ENCODE measurements at regions of chr10 and their contacts with region 1.

Region 1: DNA sequence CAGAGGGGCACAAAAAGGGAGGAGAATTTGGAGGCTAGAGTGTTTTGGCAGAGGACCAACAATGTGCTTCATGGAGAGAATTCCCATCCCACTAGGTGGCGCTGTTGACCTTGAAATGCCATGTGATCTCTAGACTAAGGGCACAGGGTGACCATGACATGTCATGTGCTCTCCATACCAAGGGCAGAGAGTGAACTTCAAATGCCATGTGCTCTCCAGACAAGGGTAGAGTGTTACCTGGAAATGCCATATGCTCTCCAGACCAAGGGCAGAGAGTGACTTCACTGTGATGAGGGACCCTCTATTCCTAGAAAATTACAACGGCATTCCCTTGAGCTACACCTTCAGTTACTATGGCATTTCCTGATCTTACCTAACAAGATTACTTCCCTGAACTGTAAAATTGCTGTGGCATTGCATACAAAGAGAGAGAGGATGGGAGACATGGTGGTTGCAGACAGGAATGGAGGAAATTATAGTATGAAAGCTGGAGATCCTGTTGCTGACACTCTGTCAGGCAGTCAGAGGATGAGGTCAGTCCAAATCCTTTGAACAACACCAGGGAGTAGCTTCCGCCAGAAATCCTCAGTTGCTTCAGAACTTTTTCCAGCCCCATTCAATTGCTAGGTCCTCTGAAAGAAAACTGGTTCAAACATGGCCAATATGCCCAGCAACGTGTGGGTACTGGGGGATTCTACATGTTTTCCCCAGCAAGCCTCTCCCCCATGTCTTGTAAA is 60.9 kb upstream of the ACSM6 start:
- DNase-seq: peak; percentile 86
- ATAC-seq: peak; percentile 84
- H3K4me3 Mint-ChIP-seq: no peak overlapping the region
- H3K27ac Mint-ChIP-seq: no peak overlapping the region
- H3K4me1 Mint-ChIP-seq: no peaks in the 10 kb centered on the region
- H3K27me3 Mint-ChIP-seq: no peaks in the 10 kb centered on the region

Region 2: DNA sequence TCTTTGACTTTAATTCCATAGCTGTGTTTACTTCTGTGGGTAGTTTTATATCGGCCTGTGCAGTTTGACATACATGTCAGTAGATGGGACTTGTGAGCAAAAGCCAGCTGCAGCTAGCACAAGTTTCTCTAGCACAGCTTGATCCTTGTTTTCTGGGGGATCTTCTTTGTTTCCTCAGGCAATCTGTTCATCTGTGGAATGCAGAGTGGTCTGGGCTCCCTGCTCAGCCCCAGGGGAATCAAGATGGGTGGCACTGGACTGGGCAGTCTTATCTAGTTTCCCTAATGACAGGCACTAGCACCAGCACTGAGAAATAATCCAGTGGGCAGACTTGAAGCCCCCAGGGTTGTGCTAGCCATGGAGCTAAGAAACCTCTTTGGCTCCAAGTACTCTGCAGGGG is 329.9 kb before region 1 on chr10:
- CTCF ChIA-PET with region 1: no interaction called
- DNase-seq: no peak
- ATAC-seq: no peak
- H3K4me3 Mint-ChIP-seq: no peak overlapping the region
- H3K27ac Mint-ChIP-seq: no peak overlapping the region
- H3K4me1 Mint-ChIP-seq: no peaks in the 10 kb centered on the region
- H3K27me3 Mint-ChIP-seq: no peaks in the 10 kb centered on the region

Region 3: DNA sequence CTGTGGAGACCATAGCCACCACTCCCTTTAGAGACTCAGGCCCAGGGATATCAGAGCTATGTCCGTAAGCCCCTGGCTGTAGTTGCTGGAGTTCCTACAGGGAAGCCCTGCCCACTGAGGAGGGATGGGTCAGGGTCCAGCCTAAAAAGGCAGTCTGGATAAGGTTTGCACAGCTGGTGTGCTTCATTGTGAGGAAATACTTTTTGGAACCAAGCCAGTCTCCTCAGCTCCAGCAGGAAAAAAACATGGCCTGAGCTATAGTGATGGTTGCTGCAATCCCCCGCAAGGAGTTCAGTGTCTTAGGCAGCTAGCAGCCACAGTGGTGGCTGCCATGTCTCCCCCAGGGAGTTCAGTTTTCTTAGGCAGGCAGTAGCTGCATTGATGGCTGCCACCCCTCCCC is 11.3 kb before region 1 on chr10:
- CTCF ChIA-PET with region 1: no interaction called
- DNase-seq: no peak
- ATAC-seq: no peak
- H3K4me3 Mint-ChIP-seq: no peak overlapping the region
- H3K27ac Mint-ChIP-seq: no peak overlapping the region
- H3K4me1 Mint-ChIP-seq: no peaks in the 10 kb centered on the region
- H3K27me3 Mint-ChIP-seq: no peaks in the 10 kb centered on the region

Region 4: GRCh38 chr10:95254629-95255028 is 121.4 kb after region 1 on chr10:
- CTCF ChIA-PET with region 1: no interaction called
- DNase-seq: no peak
- ATAC-seq: peak; percentile 63
- H3K4me3 Mint-ChIP-seq: no peak overlapping the region
- H3K27ac Mint-ChIP-seq: peak overlapping the region; percentile 16
- H3K4me1 Mint-ChIP-seq: peaks cover 17% of the 10 kb centered on the region
- H3K27me3 Mint-ChIP-seq: peaks cover 30% of the 10 kb centered on the region

Region 5: DNA sequence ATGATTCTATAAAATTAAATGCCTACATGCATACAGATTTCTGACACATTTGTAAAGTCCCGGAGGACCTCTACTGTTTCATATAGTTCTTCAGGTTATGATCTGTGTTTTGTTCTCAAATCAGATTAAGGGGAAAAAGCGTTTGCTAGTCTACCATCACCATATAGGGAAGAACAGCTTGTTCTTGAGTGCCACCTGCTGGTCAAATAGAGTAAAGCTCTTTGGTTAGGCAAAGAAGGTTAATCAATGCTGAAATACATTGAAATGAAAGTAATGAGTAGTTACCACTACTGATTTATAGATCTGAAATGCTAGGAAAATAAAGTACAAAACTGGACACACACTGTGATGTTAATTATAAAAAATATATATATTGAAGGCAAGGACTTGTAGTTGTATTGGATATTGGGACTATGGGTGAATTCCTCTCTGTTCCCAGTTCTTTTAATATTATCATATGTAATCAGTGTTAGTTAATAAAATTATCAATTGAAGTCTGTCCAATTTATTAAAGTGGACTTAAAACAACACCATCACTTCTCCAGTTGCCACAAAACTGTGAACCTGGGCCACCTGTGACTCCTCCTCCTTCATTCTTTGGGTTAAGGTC is 230.2 kb after region 1 on chr10:
- CTCF ChIA-PET with region 1: interaction called, 29 read pairs
- DNase-seq: peak; percentile 63
- ATAC-seq: peak; percentile 78
- H3K4me3 Mint-ChIP-seq: no peak overlapping the region
- H3K27ac Mint-ChIP-seq: no peak overlapping the region
- H3K4me1 Mint-ChIP-seq: no peaks in the 10 kb centered on the region
- H3K27me3 Mint-ChIP-seq: peaks cover 32% of the 10 kb centered on the region

Measured in activated CD8-positive, alpha-beta memory T cell treated with anti-CD3 and anti-CD28 coated beads, Interleukin-2, amount 10 ng/mL, durations not matched to agents 7 days and 5 days (primary cell).